Posterior vena cava (tissue), 2 donors: ENCODE measurements at regions of chr2 and their contacts with region 1.

Region 1: GRCh38 chr2:8298783-8299182 is 383.1 kb upstream of the ID2 start:
- DNase-seq: no peak

Region 2: GRCh38 chr2:6835467-6835866 is 1463.3 kb before region 1 on chr2:
- intact Hi-C with region 1: no loop called
- DNase-seq: no peak

Region 3: GRCh38 chr2:7725171-7725849 is 573.5 kb before region 1 on chr2:
- intact Hi-C with region 1: no loop called
- DNase-seq: no peak

Region 4: GRCh38 chr2:8230466-8230865 is 68.3 kb before region 1 on chr2:
- intact Hi-C with region 1: loop called in 1 of 2 experiments (anchors 2 kb)
- DNase-seq: no peak